ENCODE measurements at regions of chr17 and their contacts with region 1.

Region 1: DNA sequence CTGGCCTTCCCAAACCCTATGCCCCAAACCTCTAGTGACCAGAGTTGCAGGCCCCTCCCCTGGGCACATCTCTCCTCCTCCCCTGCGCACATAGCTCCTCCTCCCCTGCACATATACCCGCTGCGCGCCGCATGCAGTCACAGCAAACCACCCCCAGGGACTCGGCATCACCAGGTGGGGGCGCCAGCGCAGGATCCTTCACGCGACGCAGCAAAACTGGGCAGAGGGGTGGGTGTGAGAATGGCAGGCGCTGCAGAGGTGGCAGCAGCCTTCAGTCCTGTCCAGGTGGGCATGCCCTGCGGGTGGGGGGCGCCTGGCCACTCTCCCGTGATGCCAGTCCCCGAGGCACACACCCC is 5.6 kb downstream of the CORO6 start:
- DNase-seq: peak; percentile 97
- H3K4me3 Mint-ChIP-seq: peak overlapping the region; percentile 83
- H3K27ac Mint-ChIP-seq: peak overlapping the region; percentile 93
- H3K4me1 Mint-ChIP-seq: peaks cover 38% of the 10 kb centered on the region
- H3K27me3 Mint-ChIP-seq: peaks cover 6% of the 10 kb centered on the region

Region 2: DNA sequence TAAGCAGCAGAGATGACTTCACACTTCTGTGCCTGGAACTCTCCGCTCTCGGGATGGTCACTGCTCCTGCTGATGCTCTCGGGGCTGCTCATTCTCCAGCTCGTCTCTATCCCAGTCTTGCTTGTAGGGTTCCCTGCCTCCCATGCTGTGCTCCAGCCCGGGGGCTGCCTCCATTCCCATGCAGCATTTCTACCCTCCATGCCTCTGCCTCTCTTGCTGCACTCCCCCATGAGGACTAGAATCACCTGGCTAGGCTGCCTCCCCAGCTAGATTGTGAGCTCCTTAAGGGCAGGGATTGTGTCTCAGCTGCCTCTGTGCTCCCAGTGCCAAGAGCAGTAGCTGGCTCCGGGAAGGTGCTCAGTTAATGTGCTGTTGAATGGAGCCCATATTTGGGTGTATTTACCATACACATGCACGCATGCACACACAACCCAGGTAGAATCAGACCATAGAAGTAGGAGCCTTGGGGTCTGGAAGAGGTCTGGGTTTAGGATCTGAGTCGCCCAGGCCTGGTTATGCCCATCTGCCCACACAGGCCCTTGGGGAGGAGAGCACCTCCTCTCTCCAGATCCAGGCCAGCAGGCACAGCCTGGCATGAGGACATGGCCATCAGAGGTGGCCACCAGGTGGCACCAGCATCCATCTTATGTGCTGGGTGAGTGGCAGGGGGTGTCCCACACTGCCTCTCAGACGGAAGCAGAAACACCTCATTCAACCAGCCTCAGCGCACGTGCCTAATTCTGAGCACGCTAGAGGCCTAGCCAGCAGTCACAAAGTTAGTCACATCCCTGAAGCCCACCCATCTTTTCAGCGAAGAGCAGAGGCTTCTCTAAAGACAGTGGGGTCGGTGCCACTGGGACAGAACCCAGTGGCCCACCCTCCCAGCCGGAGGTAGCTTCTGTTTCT is 37.0 kb before region 1 on chr17:
- intact Hi-C with region 1: loop called (anchors 1 kb)
- DNase-seq: peak; percentile 96
- H3K4me3 Mint-ChIP-seq: no peak overlapping the region
- H3K27ac Mint-ChIP-seq: peak overlapping the region; percentile 82
- H3K4me1 Mint-ChIP-seq: peaks cover 13% of the 10 kb centered on the region
- H3K27me3 Mint-ChIP-seq: no peaks in the 10 kb centered on the region

Region 3: GRCh38 chr17:29589524-29590410 is 27.3 kb before region 1 on chr17 and contains the start of gene GIT1:
- intact Hi-C with region 1: loop called (anchors 1 kb)
- DNase-seq: peak; percentile 96
- H3K4me3 Mint-ChIP-seq: peak within 1 kb of the TSS; percentile 92
- H3K27ac Mint-ChIP-seq: peak within 1 kb of the TSS; percentile 95
- H3K4me1 Mint-ChIP-seq: peaks cover 52% of the 10 kb centered on the region
- H3K27me3 Mint-ChIP-seq: no peaks in the 10 kb centered on the region
- total RNA-seq, gene GIT1: 91.3 and 91.4 TPM in 2 replicates

Region 4: DNA sequence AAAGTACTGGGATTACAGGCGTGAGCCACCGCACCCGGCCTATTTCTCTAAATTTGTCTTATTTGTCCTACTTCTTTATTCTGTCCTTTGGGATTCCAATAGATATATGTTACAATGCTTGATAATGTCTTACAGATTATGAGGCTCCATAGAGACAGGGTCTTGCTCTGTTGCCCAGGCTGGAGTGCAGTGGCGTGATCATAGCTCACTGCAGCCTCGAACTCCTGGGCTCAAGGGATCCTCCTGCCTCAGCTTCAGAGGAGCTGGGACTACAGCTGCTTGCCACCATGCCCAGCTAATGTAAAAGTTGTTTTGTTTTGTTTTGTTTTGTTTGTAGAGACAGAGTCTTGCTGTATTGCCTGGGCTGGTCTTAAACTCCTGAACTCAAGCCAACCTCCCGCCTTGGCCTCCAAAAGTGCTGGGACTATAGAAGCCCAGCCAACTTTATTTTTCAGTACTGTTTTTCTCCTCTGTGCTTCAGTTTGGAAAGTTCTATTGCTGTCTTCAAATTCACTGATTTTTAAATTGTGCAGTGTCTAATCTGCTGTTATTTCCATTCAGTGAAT is 13.9 kb before region 1 on chr17:
- intact Hi-C with region 1: no loop called
- DNase-seq: no peak
- H3K4me3 Mint-ChIP-seq: no peak overlapping the region
- H3K27ac Mint-ChIP-seq: no peak overlapping the region
- H3K4me1 Mint-ChIP-seq: no peaks in the 10 kb centered on the region
- H3K27me3 Mint-ChIP-seq: no peaks in the 10 kb centered on the region